ENCODE measurements at regions of chr17 and their contacts with region 1.

Region 1: GRCh38 chr17:66348584-66349165 is 46.3 kb downstream of the PRKCA start:
- DNase-seq: peak in 1 of 2 donors; percentile 35
- ATAC-seq: peak; percentile 58 to 93 (median 86)
- H3K4me3 ChIP-seq: no peak overlapping the region
- H3K27ac ChIP-seq: peak overlapping the region in 3 of 10 donors; percentile 41 to 52 (median 52)
- H3K4me1 ChIP-seq: peaks cover 4 to 40% (median 22%) of the 10 kb centered on the region in 9 donors
- H3K27me3 ChIP-seq: no peaks in the 10 kb centered on the region
- CTCF ChIP-seq: no peak

Region 2: GRCh38 chr17:66185867-66186266 is 162.8 kb before region 1 on chr17:
- intact Hi-C with region 1: loop called in 1 of 10 experiments (anchors 5 kb)
- DNase-seq: no peak
- ATAC-seq: no peak
- H3K4me3 ChIP-seq: no peak overlapping the region
- H3K27ac ChIP-seq: no peak overlapping the region
- H3K4me1 ChIP-seq: peaks cover 0 to 26% (median 14%) of the 10 kb centered on the region in 9 donors
- H3K27me3 ChIP-seq: no peaks in the 10 kb centered on the region
- CTCF ChIP-seq: no peak

Region 3: GRCh38 chr17:66533572-66533971 is 184.9 kb after region 1 on chr17:
- intact Hi-C with region 1: loop called in 1 of 10 experiments (anchors 10 kb)
- DNase-seq: no peak
- ATAC-seq: peak in 4 of 8 donors; percentile 23 to 63 (median 51)
- H3K4me3 ChIP-seq: no peak overlapping the region
- H3K27ac ChIP-seq: no peak overlapping the region
- H3K4me1 ChIP-seq: peaks cover 0 to 13% (median 6%) of the 10 kb centered on the region in 9 donors
- H3K27me3 ChIP-seq: no peaks in the 10 kb centered on the region
- CTCF ChIP-seq: peak in 1 of 9 donors; percentile 13